Colonic mucosa (tissue), 4 donors: ENCODE measurements at regions of chr11 and their contacts with region 1.

Region 1: DNA sequence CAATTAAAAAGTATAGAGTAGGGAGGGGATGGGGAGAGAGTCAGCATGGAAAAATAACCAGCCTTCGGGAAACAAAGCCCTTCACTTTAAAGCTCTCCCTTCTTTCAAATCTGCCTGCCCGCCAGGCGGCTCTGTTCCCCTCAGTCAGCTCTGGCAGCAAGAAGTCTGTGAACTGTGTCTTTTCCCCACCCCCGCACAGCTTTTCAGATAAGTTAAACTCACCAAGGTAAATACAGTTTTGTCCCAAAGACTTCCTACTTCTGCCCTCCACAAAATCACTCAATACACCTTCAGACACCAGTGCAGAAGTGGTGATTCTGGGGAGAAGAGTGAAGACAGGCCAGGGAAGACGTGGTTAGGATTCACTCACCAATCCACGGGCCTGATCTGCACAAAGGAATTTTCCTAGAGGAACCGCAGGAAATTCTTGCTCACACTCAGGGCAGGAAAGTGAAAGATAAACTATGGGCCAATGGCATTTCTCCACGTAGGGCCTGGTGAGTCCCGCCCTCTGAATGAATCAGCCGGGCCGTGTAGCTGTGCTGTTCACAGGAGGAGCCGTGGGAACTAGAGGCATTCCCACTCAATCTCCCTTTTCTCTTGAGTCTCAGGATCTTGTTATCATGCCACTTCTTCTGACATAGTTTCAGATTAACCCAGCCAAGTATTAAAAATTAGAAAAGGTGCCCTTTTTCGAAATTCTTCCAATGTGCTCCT is at the start of gene TRIM5:
- DNase-seq: peak; percentile 91
- H3K4me3 ChIP-seq: peak within 1 kb of the TSS; percentile 40
- H3K27ac ChIP-seq: peak within 1 kb of the TSS; percentile 94
- H3K4me1 ChIP-seq: no peaks in the 10 kb centered on the region
- H3K27me3 ChIP-seq: no peaks in the 10 kb centered on the region
- CTCF ChIP-seq: peak; percentile 48
- total RNA-seq, gene TRIM5: 21.4 to 23.3 TPM

Region 2: GRCh38 chr11:5345831-5346230 is 339.0 kb before region 1 on chr11:
- intact Hi-C with region 1: no loop called
- DNase-seq: no peak
- H3K4me3 ChIP-seq: no peak overlapping the region
- H3K27ac ChIP-seq: no peak overlapping the region
- H3K4me1 ChIP-seq: no peaks in the 10 kb centered on the region
- H3K27me3 ChIP-seq: no peaks in the 10 kb centered on the region
- CTCF ChIP-seq: no peak

Region 3: DNA sequence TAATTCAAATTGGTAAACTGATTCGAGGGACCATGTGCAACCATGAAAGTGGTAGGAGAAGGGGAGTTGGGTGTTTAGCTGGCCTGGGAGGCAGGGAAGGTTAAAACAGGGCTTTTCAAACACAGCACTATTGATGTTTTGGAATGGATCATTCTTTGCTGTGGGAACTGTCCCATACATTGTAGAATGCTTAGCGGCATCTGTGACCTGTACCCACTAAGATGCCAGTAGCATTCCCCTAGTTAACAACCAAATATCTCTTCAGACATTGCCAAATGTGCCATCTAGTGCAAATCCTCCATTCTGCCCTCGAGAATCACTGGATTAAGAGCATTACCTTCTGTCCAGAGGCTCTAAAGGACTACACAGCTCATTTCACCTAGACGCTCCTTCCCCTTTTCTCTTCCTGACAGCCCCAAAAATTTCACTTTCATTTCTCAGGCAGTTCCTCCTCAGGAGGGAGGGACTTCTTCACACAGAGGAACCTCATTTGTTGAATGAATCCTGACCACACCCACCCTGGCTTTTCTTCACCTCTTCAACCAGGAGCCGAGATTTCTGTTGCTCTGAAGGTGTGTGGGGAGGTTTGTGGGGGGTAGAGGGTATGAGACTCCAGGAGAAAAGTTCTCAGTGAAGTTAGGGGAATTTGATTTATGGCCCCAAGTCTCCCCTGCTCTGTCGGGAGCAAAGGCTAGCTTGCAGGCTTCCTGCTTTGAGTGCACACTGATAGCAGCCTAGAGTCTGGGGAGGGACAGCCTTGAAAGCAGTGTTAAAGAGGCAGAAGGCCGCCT is 60.1 kb before region 1 on chr11 and contains the start of gene TRIM34:
- intact Hi-C with region 1: loop called (anchors 10 kb)
- DNase-seq: peak; percentile 85
- H3K4me3 ChIP-seq: peak within 1 kb of the TSS; percentile 55
- H3K27ac ChIP-seq: peak within 1 kb of the TSS; percentile 81
- H3K4me1 ChIP-seq: peaks cover 12% of the 10 kb centered on the region
- H3K27me3 ChIP-seq: no peaks in the 10 kb centered on the region
- CTCF ChIP-seq: no peak
- total RNA-seq, gene TRIM34: 6.2 to 7.8 TPM